SK-N-SH (cell line): ENCODE measurements at regions of chr17 and their contacts with region 1.

Region 1: GRCh38 chr17:66673668-66674315 is 161.1 kb upstream of the CACNG5 start:
- DNase-seq: peak; percentile 70
- H3K4me3 ChIP-seq: no peak overlapping the region; a peak in 1 of 4 replicates
- H3K27ac ChIP-seq: peak overlapping the region; percentile 12 to 36; a peak in 3 of 4 replicates
- H3K4me1 ChIP-seq: peaks cover 3 to 15% of the 10 kb centered on the region in 2 experiments; a peak in 2 of 4 replicates
- H3K27me3 ChIP-seq: no peaks in the 10 kb centered on the region
- CTCF ChIP-seq: peak; percentile 90
- EP300 ChIP-seq: 0 out of 4 replicates have a peak, but pooled peaks of 1 of the 2 experiments have one; percentile 21
- RAD21 ChIP-seq: peak; percentile 99

Region 2: GRCh38 chr17:66200685-66201092 is 473.1 kb before region 1 on chr17:
- CTCF ChIA-PET with region 1: interaction called, 71 read pairs
- POLR2A ChIA-PET with region 1: no interaction called
- DNase-seq: peak; percentile 75
- H3K4me3 ChIP-seq: no peak overlapping the region
- H3K27ac ChIP-seq: no peak overlapping the region
- H3K4me1 ChIP-seq: peaks cover 0 to 2% of the 10 kb centered on the region in 2 experiments; a peak in 1 of 4 replicates
- H3K27me3 ChIP-seq: no peaks in the 10 kb centered on the region
- CTCF ChIP-seq: peak; percentile 98
- EP300 ChIP-seq: no peak
- RAD21 ChIP-seq: peak; percentile 100

Region 3: DNA sequence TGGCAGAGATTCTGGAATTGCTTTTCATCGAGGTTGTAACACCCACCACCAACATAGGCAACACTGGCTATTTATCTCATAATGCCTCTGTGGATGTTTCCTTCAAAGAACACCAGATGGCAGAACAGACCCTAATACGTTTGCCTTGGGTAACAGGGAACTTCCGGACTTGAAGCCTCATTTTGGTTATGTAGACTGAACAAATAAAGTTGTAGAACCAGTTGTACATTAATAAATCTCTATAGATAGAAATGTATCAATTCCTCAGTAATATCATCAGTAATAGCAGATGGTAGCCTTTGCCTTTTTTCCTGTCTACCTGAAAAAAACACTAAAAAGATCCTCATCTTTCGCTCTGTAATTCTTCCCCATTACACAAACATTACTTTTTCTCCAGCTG is 418.7 kb before region 1 on chr17:
- CTCF ChIA-PET with region 1: interaction called, 29 read pairs
- POLR2A ChIA-PET with region 1: no interaction called
- DNase-seq: peak; percentile 76
- H3K4me3 ChIP-seq: no peak overlapping the region
- H3K27ac ChIP-seq: no peak overlapping the region
- H3K4me1 ChIP-seq: peaks cover 0 to 6% of the 10 kb centered on the region in 2 experiments; a peak in 2 of 4 replicates
- H3K27me3 ChIP-seq: no peaks in the 10 kb centered on the region
- CTCF ChIP-seq: peak; percentile 96
- EP300 ChIP-seq: no peak
- RAD21 ChIP-seq: peak; percentile 99

Region 4: DNA sequence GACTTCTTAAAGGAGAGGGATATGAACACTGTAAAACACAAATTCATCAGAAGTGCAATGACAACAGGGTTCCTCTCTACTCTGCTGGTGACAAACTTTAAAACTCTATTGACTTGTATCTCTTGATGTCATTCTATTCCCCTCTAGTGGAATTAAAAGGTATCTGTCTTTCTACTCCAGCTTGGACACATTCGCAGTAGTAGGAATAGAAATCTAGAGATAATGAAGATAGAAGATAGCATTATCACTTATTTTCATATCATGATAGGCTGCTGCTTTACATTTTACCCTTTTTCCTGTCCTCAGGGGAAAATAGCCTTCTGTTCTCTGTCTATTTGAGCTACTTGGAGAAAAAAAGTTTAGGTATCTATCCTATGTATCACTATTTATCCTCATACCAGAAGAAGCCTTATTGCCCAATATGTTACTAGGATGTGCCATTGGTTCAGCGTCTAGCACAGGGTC is 48.4 kb before region 1 on chr17:
- CTCF ChIA-PET with region 1: interaction called, 90 read pairs
- POLR2A ChIA-PET with region 1: no interaction called
- DNase-seq: peak; percentile 63
- H3K4me3 ChIP-seq: no peak overlapping the region
- H3K27ac ChIP-seq: peak overlapping the region in 1 of 2 experiments; percentile 1; a peak in 2 of 4 replicates
- H3K4me1 ChIP-seq: peaks cover under 1 to 31% of the 10 kb centered on the region in 2 experiments; a peak in 3 of 4 replicates
- H3K27me3 ChIP-seq: no peaks in the 10 kb centered on the region
- CTCF ChIP-seq: peak; percentile 78
- EP300 ChIP-seq: peak in 1 of 2 experiments; percentile 55; a peak in 1 of 4 replicates
- RAD21 ChIP-seq: peak; percentile 95

Region 5: GRCh38 chr17:66649818-66650543 is 23.8 kb before region 1 on chr17:
- CTCF ChIA-PET with region 1: interaction called, 14 read pairs
- POLR2A ChIA-PET with region 1: no interaction called
- DNase-seq: no peak
- H3K4me3 ChIP-seq: no peak overlapping the region
- H3K27ac ChIP-seq: no peak overlapping the region
- H3K4me1 ChIP-seq: peaks cover 8 to 12% of the 10 kb centered on the region in 2 experiments; a peak in 2 of 4 replicates
- H3K27me3 ChIP-seq: no peaks in the 10 kb centered on the region
- CTCF ChIP-seq: no peak
- EP300 ChIP-seq: no peak
- RAD21 ChIP-seq: no peak

Region 6: GRCh38 chr17:66661381-66661843 is 12.4 kb before region 1 on chr17:
- CTCF ChIA-PET with region 1: interaction called, 16 read pairs
- POLR2A ChIA-PET with region 1: no interaction called
- DNase-seq: no peak
- H3K4me3 ChIP-seq: no peak overlapping the region
- H3K27ac ChIP-seq: peak overlapping the region in 1 of 2 experiments; percentile 88; a peak in 2 of 4 replicates
- H3K4me1 ChIP-seq: peaks cover 9 to 37% of the 10 kb centered on the region in 2 experiments; a peak in 3 of 4 replicates
- H3K27me3 ChIP-seq: no peaks in the 10 kb centered on the region
- CTCF ChIP-seq: no peak
- EP300 ChIP-seq: peak in 1 of 2 experiments; percentile 16; a peak in 1 of 4 replicates
- RAD21 ChIP-seq: no peak